ENCODE measurements at regions of chr1 and their contacts with region 1.

Region 1: DNA sequence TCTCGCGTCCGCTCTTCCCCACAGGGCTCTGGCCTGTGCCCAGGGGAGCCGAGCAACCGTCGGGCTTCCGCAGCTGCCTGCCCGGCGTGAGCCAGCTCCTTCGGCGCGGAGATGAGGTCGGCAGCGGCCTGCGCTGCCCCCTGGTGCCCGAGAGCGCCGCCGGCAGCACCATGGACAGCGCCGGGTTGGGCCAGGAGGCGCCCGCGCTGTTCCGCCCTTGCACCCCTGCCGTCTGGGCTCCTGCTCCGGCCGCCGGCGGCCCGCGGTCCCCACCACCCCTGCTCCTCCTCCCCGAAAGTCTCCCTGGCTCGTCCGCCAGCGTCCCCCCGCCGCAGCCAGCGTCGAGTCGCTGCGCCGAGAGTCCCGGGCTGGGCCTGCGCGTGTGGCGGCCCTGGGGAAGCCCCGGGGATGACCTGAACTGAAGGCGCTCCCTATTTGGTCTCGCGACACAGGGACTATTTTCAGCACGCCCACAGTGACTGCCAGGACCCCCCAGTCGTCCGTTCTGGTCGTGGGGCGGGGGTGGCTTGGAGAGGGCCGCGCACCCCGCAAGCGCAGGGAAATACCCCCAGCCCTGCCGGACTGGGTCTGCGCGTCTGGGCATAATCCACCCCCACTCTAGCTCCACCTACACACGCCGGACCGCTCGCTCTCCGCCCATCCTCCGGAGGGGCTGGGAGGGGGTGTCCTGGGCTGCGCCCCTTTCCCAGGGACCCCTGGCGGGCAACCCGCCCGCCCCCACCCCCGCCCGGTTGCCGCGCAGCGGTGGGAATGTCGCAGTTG is 1.3 kb downstream of the HES3 start:
- DNase-seq: peak; percentile 78 to 87 (median 83)
- H3K4me3 ChIP-seq: no peak overlapping the region
- H3K27ac ChIP-seq: no peak overlapping the region
- H3K4me1 ChIP-seq: peaks cover 5 to 30% of the 10 kb centered on the region in 2 donors
- H3K27me3 ChIP-seq: peaks cover 56% of the 10 kb centered on the region
- CTCF ChIP-seq: peak; percentile 62 to 97 (median 72)
- POLR2A ChIP-seq: no peak

Region 2: DNA sequence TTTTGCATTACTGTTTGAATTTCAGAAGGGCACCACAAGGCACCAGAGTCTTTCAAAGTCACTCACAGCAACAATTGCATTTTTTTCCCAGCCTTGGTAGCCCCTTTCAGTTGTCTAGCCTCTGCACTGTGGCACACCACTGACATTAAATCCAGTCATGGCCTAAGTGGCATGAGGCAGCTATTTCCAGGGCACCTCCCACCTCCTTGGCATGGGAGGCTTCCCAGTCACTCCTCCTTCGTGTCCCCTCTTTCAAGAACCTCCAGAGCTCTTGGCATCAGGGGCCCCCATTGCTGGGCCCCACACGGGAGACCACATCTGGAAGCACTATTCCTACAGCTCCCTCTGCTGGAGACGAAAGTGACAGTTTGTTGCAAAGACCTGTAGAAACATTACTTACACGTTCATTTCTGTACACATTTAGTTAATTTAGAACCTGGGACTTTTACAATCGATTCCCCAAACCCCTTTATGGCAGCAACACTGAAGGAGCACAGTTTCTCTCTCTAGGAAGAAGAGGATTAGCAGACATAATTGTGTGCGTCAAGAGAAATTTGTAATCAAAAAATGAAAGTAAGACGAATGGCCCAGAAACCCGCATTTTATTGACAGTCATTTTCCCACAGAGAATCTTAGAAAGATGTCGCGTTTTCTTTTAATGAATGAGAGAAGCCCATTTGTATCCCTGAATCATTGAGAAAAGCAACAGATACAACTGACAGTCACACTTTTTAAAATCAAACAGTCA is 59.5 kb before region 1 on chr1:
- intact Hi-C with region 1: no loop called
- DNase-seq: no peak
- H3K4me3 ChIP-seq: no peak overlapping the region
- H3K27ac ChIP-seq: no peak overlapping the region
- H3K4me1 ChIP-seq: peaks cover 0 to 5% of the 10 kb centered on the region in 2 donors
- H3K27me3 ChIP-seq: peaks cover 6% of the 10 kb centered on the region
- CTCF ChIP-seq: peak in 4 of 6 experiments; percentile 13 to 38 (median 30)
- POLR2A ChIP-seq: no peak

Region 3: DNA sequence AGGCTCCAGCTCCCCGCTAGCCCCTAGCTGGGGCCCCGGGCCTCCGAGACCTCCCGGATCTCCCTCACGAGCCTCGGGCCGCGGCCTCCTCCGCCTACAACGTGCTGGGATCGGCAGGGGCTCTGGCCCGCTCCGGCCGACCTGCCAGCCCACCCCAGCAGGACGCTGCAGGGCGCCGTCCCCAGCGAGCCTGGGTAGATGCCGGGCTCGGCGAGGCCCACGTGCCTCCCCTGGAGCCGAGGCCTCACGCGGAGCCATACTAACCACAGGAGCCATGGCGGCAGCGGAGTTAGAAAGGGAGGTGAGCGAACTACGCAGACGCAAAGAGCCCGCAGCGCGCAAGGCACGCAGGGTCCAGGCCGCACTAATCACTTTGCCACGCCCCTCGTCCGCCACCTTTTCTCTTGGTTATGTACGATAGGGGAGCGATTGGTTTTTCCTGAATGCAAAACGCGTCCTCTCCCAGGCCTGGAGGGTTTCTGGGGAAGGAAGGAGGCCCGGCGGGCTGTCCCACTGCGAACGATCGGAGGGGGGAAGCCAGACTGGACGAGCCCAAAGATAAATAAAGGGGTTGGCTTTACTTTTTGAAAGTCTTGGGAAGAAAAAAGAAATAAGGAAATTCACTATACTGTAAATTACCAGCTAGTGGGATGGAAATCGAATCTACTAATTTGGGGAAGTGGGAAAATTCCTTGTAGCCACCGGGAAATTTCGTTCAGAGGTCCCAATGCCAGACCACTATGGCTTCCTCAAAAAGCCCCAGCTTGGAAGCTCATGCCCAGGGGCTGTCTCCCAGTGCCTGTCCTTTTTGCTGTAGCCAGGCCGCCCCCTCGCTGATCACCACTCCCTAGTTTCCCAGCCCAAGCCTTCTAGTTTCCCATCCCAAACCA is 45.7 kb before region 1 on chr1 and contains the start of gene RPL22:
- intact Hi-C with region 1: no loop called
- DNase-seq: peak; percentile 97 to 99 (median 99)
- H3K4me3 ChIP-seq: peak within 1 kb of the TSS; percentile 78 to 97 (median 88)
- H3K27ac ChIP-seq: peak within 1 kb of the TSS in 4 of 5 donors; percentile 75 to 90 (median 79)
- H3K4me1 ChIP-seq: peaks cover 9 to 21% of the 10 kb centered on the region in 2 donors
- H3K27me3 ChIP-seq: no peaks in the 10 kb centered on the region
- CTCF ChIP-seq: peak in 1 of 6 experiments; percentile 21
- POLR2A ChIP-seq: peak; percentile 68 to 92
- total RNA-seq, gene RPL22: 78.5 to 350 (median 291) TPM

Region 4: DNA sequence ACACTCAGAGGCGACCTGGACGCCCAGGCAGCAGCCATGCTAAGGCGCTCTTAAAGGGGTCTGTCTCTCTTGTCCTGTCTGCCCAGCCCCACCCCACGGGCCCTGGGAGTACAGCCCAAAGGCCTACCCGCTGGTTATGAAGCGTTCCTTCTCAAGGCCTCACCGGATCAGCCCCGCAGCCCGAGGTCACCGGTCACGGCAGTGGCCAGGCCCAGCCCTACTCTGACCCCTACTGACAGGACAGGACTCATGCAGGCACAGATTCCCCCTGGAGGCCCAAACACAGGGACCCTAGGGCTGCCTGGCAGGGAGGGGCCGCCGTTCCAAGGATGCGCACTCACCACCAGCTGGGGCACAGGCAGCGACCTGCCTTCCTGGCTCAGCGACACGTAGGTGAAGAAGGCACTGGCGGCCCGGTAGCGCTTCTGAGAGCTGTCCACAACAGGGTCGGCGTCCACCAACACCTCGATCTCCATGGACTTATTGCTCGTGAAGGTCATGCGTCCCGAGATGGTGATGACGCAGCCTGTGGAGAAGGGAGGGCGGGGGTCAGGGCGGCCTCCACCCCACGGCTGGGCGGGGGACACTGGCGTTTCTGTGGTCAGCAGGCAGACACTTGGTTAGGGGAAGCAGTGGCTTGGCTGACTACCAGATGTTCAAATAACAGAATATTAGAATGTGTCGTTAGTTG is 35.6 kb after region 1 on chr1:
- intact Hi-C with region 1: loop called in 1 of 2 experiments (anchors 5 kb)
- DNase-seq: peak in 6 of 7 donors; percentile 59 to 77 (median 66)
- H3K4me3 ChIP-seq: no peak overlapping the region
- H3K27ac ChIP-seq: no peak overlapping the region
- H3K4me1 ChIP-seq: peaks cover 0 to 10% of the 10 kb centered on the region in 2 donors
- H3K27me3 ChIP-seq: no peaks in the 10 kb centered on the region
- CTCF ChIP-seq: peak; percentile 11 to 63 (median 49)
- POLR2A ChIP-seq: no peak

Region 5: GRCh38 chr1:6343506-6344405 is 98.5 kb after region 1 on chr1:
- intact Hi-C with region 1: loop called (anchors 2 kb)
- DNase-seq: peak; percentile 61 to 89 (median 65)
- H3K4me3 ChIP-seq: no peak overlapping the region
- H3K27ac ChIP-seq: no peak overlapping the region
- H3K4me1 ChIP-seq: no peaks in the 10 kb centered on the region
- H3K27me3 ChIP-seq: no peaks in the 10 kb centered on the region
- CTCF ChIP-seq: peak; percentile 64 to 91 (median 86)
- POLR2A ChIP-seq: no peak

Region 6: GRCh38 chr1:6373961-6374720 is 128.9 kb after region 1 on chr1:
- intact Hi-C with region 1: no loop called
- DNase-seq: no peak
- H3K4me3 ChIP-seq: no peak overlapping the region
- H3K27ac ChIP-seq: no peak overlapping the region
- H3K4me1 ChIP-seq: no peaks in the 10 kb centered on the region
- H3K27me3 ChIP-seq: no peaks in the 10 kb centered on the region
- CTCF ChIP-seq: no peak
- POLR2A ChIP-seq: no peak

Region 7: GRCh38 chr1:6401673-6402072 is 156.4 kb after region 1 on chr1:
- intact Hi-C with region 1: loop called in 1 of 2 experiments (anchors 5 kb)
- DNase-seq: no peak
- H3K4me3 ChIP-seq: no peak overlapping the region
- H3K27ac ChIP-seq: no peak overlapping the region
- H3K4me1 ChIP-seq: peaks cover 6 to 8% of the 10 kb centered on the region in 2 donors
- H3K27me3 ChIP-seq: no peaks in the 10 kb centered on the region
- CTCF ChIP-seq: no peak
- POLR2A ChIP-seq: no peak

Region 8: DNA sequence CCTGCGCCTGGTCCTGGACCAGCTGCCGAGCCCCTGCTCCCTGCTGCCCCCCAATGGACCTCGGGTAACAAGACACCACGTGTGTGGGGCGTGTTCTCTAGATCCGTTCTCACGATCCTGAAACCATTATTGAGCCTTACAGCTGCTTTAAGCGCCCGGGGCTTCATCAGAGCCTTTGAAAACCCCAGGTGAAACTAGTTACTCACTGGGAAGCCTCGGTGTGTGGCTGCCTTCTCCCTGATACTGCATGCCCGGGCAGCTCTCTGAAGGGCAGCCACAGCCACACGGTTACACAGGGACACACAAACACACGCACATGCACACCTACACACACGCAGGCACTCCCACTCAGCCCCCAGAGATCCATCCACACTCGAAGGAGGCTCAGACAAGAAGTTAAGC is 169.2 kb after region 1 on chr1:
- intact Hi-C with region 1: loop called in 1 of 2 experiments (anchors 5 kb)
- DNase-seq: no peak
- H3K4me3 ChIP-seq: no peak overlapping the region
- H3K27ac ChIP-seq: no peak overlapping the region
- H3K4me1 ChIP-seq: peaks cover 2 to 8% of the 10 kb centered on the region in 2 donors
- H3K27me3 ChIP-seq: peaks cover 56% of the 10 kb centered on the region
- CTCF ChIP-seq: peak in 3 of 6 experiments; percentile 13 to 28 (median 23)
- POLR2A ChIP-seq: no peak

Measured in adrenal gland (tissue), 19 donors.